Calu3 (cell line): ENCODE measurements at regions of chr5 and their contacts with region 1.

Region 1: GRCh38 chr5:34656001-34656699 is at the start of gene RAI14:
- DNase-seq: peak; percentile 88
- H3K4me3 Mint-ChIP-seq: peak within 1 kb of the TSS; percentile 60
- H3K27ac Mint-ChIP-seq: peak within 1 kb of the TSS; percentile 54
- H3K4me1 Mint-ChIP-seq: peaks cover 27% of the 10 kb centered on the region
- H3K27me3 Mint-ChIP-seq: no peaks in the 10 kb centered on the region
- CTCF ChIP-seq: no peak
- total RNA-seq, gene RAI14: 56.2 and 84.3 TPM in 2 replicates

Region 2: GRCh38 chr5:34474573-34475021 is 181.6 kb before region 1 on chr5:
- CTCF ChIA-PET with region 1: interaction called, 10 read pairs
- intact Hi-C with region 1: no loop called
- DNase-seq: peak; percentile 29
- H3K4me3 Mint-ChIP-seq: no peak overlapping the region
- H3K27ac Mint-ChIP-seq: no peak overlapping the region
- H3K4me1 Mint-ChIP-seq: peaks cover 12% of the 10 kb centered on the region
- H3K27me3 Mint-ChIP-seq: no peaks in the 10 kb centered on the region
- CTCF ChIP-seq: peak; percentile 68

Region 3: DNA sequence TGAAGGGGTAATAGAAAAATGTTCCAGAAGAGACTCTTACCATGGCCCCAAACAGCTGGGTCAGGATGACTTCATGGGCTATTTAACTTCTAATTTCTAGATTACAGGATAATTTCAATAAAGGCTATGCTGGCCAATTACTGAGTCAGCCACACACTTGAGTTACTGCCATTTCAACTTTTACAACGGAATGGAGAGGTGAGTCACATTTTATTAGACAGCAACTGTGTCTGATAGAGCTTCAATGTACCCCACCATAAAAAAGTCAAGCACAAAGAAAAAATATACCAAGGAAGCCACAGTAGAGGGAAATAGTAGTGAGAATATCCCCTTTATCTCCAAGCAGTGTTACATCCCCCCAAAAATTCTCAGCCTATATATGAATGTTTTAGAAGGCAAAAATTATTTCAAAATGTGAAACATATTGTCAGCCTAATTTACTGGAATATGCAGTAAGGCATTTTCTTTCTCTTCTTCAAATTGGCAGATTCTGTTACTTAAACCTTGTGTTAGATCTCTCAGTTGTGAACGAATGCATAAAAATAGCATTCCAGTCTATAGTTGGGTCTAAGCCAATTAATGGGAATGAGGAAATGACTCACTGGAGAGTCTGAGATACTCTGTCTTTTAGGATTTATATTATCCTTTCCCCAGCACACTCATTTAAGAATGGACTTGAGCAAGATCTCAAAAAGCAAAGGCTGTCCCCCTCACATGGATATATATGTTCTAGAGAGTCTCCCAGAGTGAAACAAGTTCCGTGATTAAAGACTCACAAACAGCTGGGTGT is 47.1 kb before region 1 on chr5:
- CTCF ChIA-PET with region 1: no interaction called
- intact Hi-C with region 1: loop called (anchors 5 kb)
- DNase-seq: no peak
- H3K4me3 Mint-ChIP-seq: peak overlapping the region; percentile 37
- H3K27ac Mint-ChIP-seq: peak overlapping the region; percentile 95
- H3K4me1 Mint-ChIP-seq: peaks cover 32% of the 10 kb centered on the region
- H3K27me3 Mint-ChIP-seq: no peaks in the 10 kb centered on the region
- CTCF ChIP-seq: no peak